ENCODE measurements at regions of chr15 and their contacts with region 1.

Region 1: DNA sequence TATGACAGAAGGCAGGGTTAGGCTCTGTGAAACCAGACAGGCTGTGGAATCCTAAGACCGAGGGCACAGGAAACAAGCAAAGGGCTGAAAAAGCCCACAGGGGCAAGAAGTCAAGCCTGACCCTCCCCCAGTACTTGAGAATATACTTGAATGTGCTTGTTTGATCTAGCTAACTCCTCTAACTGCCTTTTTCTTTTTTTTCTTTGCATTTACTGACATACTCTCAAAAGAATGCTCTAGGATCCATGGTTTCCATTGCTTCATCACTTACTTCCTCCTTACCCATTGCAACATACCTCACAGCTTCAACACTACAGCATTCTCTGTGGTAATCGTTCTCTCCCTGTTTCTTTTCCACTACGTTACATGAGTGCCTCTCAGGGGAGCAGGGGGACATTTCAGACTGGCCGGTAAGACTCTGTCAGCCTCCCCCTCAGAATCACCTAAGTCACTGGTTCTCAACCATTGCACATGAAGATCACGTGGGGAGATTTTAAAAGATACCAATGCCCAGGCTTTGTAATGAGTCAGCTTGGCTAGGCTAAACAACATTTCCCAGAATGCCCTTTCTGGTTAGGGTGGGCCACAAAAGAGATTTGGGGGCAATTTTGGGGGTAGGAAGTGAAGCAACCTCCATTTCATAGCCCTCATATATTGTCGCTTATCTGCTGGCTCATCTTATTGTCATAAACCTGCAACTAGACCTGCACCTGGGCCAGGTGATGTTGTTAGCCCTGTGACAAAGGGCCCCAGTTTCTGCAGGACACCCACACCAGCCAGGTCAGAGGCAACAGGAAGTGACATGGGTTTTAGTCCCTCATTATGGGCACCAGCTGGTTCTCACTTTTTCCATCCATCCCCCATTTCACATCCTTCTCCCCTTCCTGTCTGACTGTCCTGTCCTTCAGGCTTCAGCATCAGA is 24.6 kb upstream of the RSL24D1 start:
- DNase-seq: no peak
- ATAC-seq: no peak
- H3K4me3 ChIP-seq: no peak overlapping the region
- H3K27ac ChIP-seq: no peak overlapping the region
- H3K4me1 ChIP-seq: no peaks in the 10 kb centered on the region
- H3K27me3 ChIP-seq: no peaks in the 10 kb centered on the region
- CTCF ChIP-seq: no peak

Region 2: DNA sequence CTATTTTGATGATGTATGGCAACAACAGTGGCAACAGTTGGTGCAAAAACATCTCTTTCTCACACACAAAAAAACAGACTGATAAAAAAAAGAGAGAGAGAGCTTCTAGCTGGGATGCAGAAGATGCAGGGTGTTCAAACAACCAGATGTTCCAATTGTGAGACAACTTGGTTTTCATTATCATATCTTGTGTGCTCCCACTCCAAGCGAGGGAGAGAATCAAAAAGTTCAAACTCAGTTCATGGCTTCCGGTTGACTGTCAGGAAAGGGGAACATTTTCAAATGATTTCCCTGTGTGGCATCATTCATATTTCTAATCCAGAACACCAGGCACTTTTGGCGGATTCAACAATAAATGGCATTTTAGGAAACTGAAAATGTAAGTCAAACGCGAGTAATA is 96.7 kb before region 1 on chr15:
- CTCF ChIA-PET with region 1: no interaction called
- POLR2A ChIA-PET with region 1: no interaction called
- in situ Hi-C with region 1: no loop called
- intact Hi-C with region 1: no loop called
- DNase-seq: no peak
- ATAC-seq: no peak
- H3K4me3 ChIP-seq: no peak overlapping the region
- H3K27ac ChIP-seq: no peak overlapping the region
- H3K4me1 ChIP-seq: no peaks in the 10 kb centered on the region
- H3K27me3 ChIP-seq: no peaks in the 10 kb centered on the region
- CTCF ChIP-seq: no peak

Region 3: GRCh38 chr15:55183679-55184078 is 37.7 kb before region 1 on chr15:
- CTCF ChIA-PET with region 1: no interaction called
- POLR2A ChIA-PET with region 1: no interaction called
- in situ Hi-C with region 1: no loop called
- intact Hi-C with region 1: no loop called
- DNase-seq: no peak
- ATAC-seq: no peak
- H3K4me3 ChIP-seq: no peak overlapping the region
- H3K27ac ChIP-seq: no peak overlapping the region
- H3K4me1 ChIP-seq: 0 out of 2 replicates have a peak, but pooled peaks cover 3% of the 10 kb centered on the region
- H3K27me3 ChIP-seq: no peaks in the 10 kb centered on the region
- CTCF ChIP-seq: no peak

Region 4: DNA sequence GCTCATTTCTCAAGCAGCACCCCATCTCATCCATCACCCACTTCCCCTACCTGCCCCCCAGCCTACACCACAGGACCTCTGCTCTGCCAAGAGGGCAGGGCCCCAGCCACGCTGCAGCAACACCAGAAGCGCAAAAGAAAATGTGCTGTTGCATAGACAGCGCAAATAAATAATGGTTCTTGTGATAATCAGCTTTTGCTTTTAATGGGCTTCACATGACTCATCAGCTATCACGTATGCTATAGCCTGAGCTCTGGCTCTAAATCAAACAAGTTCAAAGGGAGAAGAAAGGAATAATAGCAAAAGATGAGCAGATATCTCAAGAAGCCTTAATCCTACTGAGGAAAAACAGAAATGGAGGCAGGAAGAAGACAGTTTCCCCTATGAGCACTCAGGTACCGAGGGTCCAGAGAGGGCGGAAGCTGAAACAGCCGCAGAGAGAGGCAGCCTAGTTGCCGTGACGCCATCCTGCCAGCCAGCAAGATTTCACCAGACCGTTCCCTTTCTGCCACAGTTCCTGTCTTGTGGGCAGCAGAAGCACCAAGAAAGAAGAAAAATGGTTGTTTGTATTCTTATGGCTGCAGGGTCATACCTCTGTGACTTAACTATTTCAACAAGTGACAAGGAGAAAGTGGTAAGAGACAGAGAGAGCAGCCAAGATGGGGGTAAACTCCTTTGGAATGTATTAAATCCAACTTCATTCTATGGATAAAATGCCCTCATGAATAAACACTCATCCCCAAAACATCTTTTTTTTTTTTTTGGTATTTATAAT is 46.2 kb after region 1 on chr15:
- CTCF ChIA-PET with region 1: no interaction called
- POLR2A ChIA-PET with region 1: no interaction called
- in situ Hi-C with region 1: no loop called
- intact Hi-C with region 1: no loop called
- DNase-seq: no peak
- ATAC-seq: no peak
- H3K4me3 ChIP-seq: no peak overlapping the region
- H3K27ac ChIP-seq: no peak overlapping the region
- H3K4me1 ChIP-seq: no peaks in the 10 kb centered on the region
- H3K27me3 ChIP-seq: no peaks in the 10 kb centered on the region
- CTCF ChIP-seq: no peak

Region 5: DNA sequence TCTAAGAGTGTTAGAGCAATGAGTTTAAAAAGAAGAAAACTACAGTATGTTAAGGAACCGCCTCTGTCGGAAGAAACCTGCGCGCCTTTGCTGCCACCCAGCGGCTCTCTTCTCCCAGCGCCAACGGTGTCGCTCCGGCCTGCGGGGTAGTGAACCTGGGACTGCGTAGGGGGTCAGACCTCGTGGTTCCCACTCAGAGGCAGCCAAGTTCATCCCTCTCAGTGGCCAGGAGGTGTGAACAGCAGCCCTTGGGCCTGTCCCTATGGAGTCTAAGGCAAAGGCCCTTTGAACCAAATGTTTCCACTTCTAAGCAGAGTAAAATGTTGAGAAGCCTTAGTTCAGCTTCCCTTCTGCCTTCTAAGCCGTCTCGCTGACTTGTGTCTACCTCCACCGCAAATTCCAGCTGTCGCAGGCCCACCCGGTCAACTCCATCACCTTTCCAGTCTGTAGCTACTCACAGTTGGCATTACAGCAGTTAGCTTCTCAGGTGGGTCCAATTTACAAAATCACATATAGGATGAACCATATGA is 69.2 kb after region 1 on chr15:
- CTCF ChIA-PET with region 1: no interaction called
- POLR2A ChIA-PET with region 1: no interaction called
- in situ Hi-C with region 1: no loop called
- intact Hi-C with region 1: loop called (anchors 1 kb)
- DNase-seq: no peak
- ATAC-seq: peak; percentile 96
- H3K4me3 ChIP-seq: peak overlapping the region; percentile 69 to 93
- H3K27ac ChIP-seq: 0 out of 2 replicates have a peak overlapping the region, but pooled peaks have one; percentile 34
- H3K4me1 ChIP-seq: peaks cover 4% of the 10 kb centered on the region; the same call in 1 of the 2 replicates
- H3K27me3 ChIP-seq: no peaks in the 10 kb centered on the region
- CTCF ChIP-seq: peak; percentile 95

Measured in Panc1 (cell line).